ENCODE measurements at regions of chr9 and their contacts with region 1.

Region 1: DNA sequence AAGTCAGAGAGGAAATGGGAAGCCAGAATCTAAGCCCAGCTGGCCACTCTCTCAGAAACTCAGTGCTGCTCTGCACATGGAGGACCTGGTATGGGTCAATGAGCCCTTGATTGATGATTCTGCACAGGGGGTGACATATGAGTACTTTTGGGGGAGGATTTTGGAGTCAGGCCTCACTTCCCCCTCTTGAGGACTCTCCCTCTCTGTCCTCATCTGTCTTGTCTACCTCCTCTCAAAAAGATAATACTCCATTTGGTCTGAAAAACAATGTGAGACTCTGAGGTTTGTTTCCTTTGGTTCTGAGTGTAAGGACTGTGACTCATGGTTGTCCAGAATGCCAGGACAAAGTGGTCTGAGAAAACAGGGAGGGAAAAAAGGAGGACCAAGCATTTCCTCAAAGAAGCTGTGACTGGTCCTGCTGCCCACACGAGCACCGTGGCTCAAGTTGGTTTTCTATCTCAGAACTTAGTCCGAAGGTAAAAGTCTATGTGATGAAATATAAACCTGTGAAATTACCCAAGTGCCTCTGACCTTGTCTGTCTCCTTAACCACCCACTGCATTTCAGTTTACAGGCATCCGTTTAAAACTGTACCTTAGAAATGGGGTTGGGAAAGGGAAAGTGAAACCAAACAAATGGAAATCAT is 11.1 kb downstream of the TTC39B start:
- DNase-seq: no peak
- H3K4me3 ChIP-seq: peak overlapping the region; percentile 5 to 21
- H3K27ac ChIP-seq: peak overlapping the region; percentile 50 to 62
- H3K4me1 ChIP-seq: no peaks in the 10 kb centered on the region
- H3K27me3 ChIP-seq: no peaks in the 10 kb centered on the region
- CTCF ChIP-seq: no peak
- POLR2A ChIP-seq: no peak

Region 2: GRCh38 chr9:14831074-14831473 is 464.8 kb before region 1 on chr9:
- intact Hi-C with region 1: no loop called
- DNase-seq: no peak
- H3K4me3 ChIP-seq: no peak overlapping the region
- H3K27ac ChIP-seq: no peak overlapping the region
- H3K4me1 ChIP-seq: no peaks in the 10 kb centered on the region
- H3K27me3 ChIP-seq: no peaks in the 10 kb centered on the region
- CTCF ChIP-seq: no peak
- POLR2A ChIP-seq: no peak

Region 3: DNA sequence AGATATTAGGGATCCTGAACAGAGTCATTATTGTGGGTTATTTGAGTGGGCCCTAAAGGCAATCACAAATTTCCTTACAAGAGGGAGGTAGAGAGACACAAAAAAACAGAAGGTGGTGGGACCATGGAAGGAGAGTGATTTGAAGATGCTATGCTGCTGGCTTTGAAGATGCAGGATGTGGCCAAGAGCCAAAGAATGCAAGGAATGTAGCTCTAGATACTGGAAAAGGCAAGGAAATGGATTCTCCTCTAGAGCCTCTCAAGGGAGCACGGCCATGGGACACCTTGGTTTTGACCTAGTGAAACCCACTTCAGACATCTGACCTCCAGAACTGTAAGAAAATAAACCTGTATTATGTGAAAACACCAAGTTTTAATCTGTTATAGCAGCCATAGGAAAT is 42.7 kb before region 1 on chr9:
- intact Hi-C with region 1: no loop called
- DNase-seq: no peak
- H3K4me3 ChIP-seq: no peak overlapping the region
- H3K27ac ChIP-seq: no peak overlapping the region
- H3K4me1 ChIP-seq: no peaks in the 10 kb centered on the region
- H3K27me3 ChIP-seq: no peaks in the 10 kb centered on the region
- CTCF ChIP-seq: no peak
- POLR2A ChIP-seq: no peak

Region 4: DNA sequence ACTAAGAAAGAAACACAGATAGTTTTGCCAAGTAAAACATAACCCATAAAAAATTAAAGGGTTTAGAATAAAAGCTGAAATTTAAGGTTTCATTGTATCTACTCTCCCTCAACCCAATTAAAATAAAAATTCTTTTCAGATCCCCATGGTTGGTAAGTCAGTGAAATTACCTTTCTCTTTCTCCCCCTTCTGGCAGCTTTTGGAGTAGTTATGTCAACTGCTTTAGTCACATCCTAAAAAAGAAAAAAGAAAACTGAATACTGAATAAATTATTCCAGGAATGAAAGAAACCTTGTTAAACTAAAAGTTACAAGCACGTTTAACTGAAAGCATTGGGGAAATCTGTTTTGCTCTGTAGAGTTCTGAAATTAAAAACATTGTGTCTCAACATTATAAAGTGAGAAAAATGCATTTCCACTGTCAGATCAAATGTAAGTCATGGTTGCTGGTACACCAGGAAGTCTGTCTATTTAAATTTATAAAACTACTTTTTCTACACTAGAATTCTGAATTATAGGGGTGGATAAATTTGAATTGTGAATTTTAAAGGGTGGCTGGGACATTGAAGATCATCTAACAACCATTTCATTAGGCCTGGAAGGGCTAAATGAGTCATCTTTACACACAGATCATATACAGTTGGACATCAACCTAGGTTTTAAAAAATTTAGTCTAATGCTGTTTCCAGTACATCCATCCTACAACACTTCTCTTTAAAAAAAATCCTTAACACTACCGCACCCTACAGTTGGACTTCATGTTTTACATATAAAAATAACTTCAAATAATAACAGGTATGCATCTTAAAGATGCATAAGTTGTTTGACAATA is 190.2 kb after region 1 on chr9:
- intact Hi-C with region 1: loop called (anchors 10 kb)
- DNase-seq: no peak
- H3K4me3 ChIP-seq: no peak overlapping the region
- H3K27ac ChIP-seq: no peak overlapping the region
- H3K4me1 ChIP-seq: no peaks in the 10 kb centered on the region
- H3K27me3 ChIP-seq: no peaks in the 10 kb centered on the region
- CTCF ChIP-seq: peak in 2 of 4 experiments; percentile 20 to 40
- POLR2A ChIP-seq: no peak